Heart right ventricle (tissue), 16 donors: ENCODE measurements at regions of chr5 and their contacts with region 1.

Region 1: GRCh38 chr5:69234457-69235268 is at the start of gene CDK7:
- DNase-seq: peak; percentile 92 to 94
- ATAC-seq: peak; percentile 99 to 100 (median 100)
- H3K4me3 ChIP-seq: peak within 1 kb of the TSS; percentile 61 to 93 (median 89)
- H3K27ac ChIP-seq: peak within 1 kb of the TSS in 9 of 10 donors; percentile 68 to 92 (median 83)
- H3K4me1 ChIP-seq: peaks cover 4 to 34% (median 18%) of the 10 kb centered on the region in 9 donors
- H3K27me3 ChIP-seq: no peaks in the 10 kb centered on the region
- CTCF ChIP-seq: no peak
- total RNA-seq, gene CDK7: 10.5 to 17.9 (median 13.7) TPM

Region 2: DNA sequence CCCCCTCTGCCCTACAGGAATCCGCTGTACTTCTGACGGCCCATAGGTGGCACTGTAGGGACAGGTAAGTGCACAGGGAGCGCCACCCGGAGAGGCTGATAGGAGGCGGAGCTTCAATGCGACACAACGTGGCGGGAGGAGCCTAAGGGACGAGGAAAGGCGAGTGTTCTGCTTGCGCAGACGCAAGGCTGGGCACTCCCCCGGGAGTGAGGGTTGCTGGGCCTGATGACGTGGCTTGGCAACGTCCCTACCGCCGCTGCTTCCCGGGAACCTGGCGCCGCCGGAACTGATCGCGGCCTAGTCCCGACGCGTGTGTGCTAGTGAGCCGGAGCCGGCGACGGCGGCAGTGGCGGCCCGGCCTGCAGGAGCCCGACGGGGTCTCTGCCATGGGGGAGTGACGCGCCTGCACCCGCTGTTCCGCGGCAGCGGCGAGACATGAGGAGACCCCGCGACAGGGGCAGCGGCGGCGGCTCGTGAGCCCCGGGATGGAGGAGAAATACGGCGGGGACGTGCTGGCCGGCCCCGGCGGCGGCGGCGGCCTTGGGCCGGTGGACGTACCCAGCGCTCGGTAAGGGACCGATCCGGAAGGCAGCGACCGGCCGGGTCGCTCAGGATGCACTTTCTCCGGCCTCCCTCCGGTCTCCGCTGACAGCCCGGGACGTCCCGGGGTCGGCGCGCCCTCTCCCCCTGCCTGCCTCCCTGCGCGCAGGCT is 140.7 kb before region 1 on chr5 and contains the start of gene SLC30A5:
- intact Hi-C with region 1: loop called in 1 of 10 experiments (anchors 10 kb)
- DNase-seq: peak; percentile 99
- ATAC-seq: peak; percentile 100
- H3K4me3 ChIP-seq: peak within 1 kb of the TSS; percentile 68 to 100 (median 83)
- H3K27ac ChIP-seq: peak within 1 kb of the TSS; percentile 86 to 99 (median 96)
- H3K4me1 ChIP-seq: peaks cover 4 to 38% (median 22%) of the 10 kb centered on the region in 9 donors
- H3K27me3 ChIP-seq: no peaks in the 10 kb centered on the region
- CTCF ChIP-seq: peak; percentile 86 to 99 (median 93)
- total RNA-seq, gene SLC30A5: 25.7 to 36.7 (median 32.1) TPM

Region 3: DNA sequence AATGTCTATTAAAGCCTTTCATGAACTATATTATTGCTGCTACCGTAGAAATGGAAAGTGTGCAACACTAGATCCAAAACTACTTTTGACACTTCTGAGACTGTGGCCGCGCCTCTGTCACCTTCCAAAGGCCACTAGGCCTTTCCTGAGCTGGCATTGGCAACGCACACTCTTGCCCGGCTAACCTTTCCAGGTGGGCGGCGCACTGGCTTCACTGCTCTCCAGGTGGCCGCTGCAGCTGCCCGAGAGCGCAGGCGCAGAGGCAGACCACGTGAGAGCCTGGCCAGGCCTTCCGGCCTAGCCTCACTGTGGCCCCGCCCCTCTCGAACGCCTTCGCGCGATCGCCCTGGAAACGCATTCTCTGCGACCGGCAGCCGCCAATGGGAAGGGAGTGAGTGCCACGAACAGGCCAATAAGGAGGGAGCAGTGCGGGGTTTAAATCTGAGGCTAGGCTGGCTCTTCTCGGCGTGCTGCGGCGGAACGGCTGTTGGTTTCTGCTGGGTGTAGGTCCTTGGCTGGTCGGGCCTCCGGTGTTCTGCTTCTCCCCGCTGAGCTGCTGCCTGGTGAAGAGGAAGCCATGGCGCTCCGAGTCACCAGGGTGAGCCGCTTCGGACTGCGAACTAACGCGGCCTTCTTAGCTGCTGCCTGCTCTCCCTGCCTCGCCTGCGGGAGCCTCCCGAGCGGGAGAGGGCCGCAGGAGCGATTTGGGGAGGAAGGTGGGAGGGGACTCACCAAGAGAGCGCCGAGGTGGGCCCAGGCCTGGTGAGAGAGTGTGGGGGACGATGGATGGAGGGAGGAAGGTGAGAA is 67.8 kb before region 1 on chr5 and contains the start of gene CCNB1:
- intact Hi-C with region 1: loop called in 2 of 10 experiments (anchors 2 to 10 kb)
- DNase-seq: peak; percentile 97 to 98
- ATAC-seq: peak; percentile 100
- H3K4me3 ChIP-seq: peak within 1 kb of the TSS; percentile 47 to 82 (median 68)
- H3K27ac ChIP-seq: peak within 1 kb of the TSS in 6 of 10 donors; percentile 23 to 67 (median 48)
- H3K4me1 ChIP-seq: peaks cover 3 to 24% (median 10%) of the 10 kb centered on the region in 9 donors
- H3K27me3 ChIP-seq: no peaks in the 10 kb centered on the region
- CTCF ChIP-seq: peak in 1 of 9 donors; percentile 28
- total RNA-seq, gene CCNB1: 2.2 to 17.6 (median 3.7) TPM

Region 4: DNA sequence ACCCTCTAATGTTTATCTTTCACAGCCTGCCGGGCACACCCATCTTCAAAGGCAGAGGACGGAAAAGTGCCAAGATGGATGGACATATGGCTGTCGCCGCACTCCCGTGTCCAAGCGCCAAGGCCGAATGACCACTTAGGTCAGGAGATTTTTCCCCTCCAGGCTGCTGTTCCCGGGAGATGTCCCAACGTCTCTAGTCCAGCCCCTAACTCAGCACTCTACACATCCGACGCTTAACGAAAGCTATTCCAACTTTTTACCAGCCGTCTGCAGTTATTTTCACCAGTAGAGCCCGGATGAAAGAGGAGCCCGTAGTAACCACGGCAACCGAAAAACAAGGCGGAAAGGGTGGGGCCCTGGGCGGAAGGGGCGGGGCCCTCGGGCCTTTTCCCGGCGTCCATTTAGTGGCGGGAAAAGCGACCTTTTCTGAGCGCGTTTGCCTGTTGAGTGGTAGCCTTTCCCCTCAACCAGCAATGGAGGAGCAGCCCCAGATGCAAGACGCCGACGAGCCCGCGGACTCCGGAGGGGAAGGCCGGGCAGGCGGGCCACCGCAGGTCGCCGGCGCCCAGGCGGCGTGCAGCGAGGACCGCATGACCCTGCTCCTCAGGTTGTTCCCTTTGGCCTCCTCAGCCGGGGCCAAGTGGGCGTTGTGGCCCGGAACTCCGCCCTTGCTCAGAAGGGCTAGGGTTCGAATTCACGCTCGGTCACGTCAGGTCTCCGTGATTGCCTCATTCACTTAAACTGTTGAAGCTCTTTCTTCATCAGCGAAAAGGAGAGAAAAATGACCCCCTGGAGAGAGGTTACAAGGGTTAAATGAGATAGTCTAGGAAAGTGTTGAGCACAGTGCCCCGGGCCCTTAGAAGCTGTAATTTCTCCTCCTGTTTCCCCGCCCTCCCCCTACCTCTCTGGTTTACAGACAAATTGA is 45.2 kb before region 1 on chr5 and contains the start of gene CENPH:
- intact Hi-C with region 1: loop called in 1 of 10 experiments (anchors 2 kb)
- DNase-seq: peak; percentile 87 to 91
- ATAC-seq: peak; percentile 97 to 100 (median 98)
- H3K4me3 ChIP-seq: peak within 1 kb of the TSS; percentile 49 to 93 (median 78)
- H3K27ac ChIP-seq: peak within 1 kb of the TSS in 9 of 10 donors; percentile 35 to 82 (median 76)
- H3K4me1 ChIP-seq: peaks cover 3 to 18% (median 17%) of the 10 kb centered on the region in 9 donors
- H3K27me3 ChIP-seq: no peaks in the 10 kb centered on the region
- CTCF ChIP-seq: no peak
- total RNA-seq, gene CENPH: 2.4 to 5.1 (median 3.4) TPM

Region 5: GRCh38 chr5:69217548-69218526 is 16.8 kb before region 1 on chr5:
- intact Hi-C with region 1: loop called in 2 of 10 experiments (anchors 1 to 2 kb)
- DNase-seq: peak; percentile 97 to 99
- ATAC-seq: peak; percentile 98 to 99 (median 99)
- H3K4me3 ChIP-seq: peak overlapping the region; percentile 75 to 100 (median 87)
- H3K27ac ChIP-seq: peak overlapping the region; percentile 95 to 99 (median 98)
- H3K4me1 ChIP-seq: peaks cover 3 to 37% (median 16%) of the 10 kb centered on the region in 9 donors
- H3K27me3 ChIP-seq: no peaks in the 10 kb centered on the region
- CTCF ChIP-seq: peak in 7 of 9 donors; percentile 24 to 47 (median 40)

Region 6: DNA sequence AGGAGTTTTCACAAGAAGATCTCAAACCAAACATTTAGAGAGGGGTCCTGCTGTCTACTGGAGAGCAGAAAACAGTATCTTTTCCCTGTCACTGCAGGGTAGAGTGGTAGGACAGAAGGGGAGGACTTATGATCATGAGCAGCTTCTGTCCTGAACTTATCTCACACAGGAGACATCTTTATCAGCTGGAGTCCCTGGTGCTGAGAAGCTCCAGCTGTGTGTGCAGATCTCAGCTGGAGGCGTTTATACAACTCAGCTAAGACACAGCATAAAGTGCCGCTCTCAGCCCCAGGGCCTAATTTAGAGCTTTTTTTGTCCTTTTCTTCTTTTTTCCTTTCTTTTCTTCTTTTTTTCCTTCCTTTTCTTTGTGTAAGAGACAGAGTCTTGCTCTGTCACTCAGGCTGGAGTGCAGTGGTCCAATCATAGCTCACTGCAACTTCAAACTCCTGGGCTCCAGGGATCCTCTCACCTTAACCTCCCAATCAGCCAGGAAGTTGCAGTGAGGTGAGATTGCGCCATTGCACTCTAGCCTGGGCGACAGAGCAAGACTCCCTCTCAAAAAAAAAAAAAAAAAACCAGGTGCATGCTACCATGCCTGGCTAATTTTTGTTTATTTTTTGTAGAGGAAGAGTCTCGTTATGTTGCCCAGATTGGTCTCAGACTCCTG is 66.0 kb after region 1 on chr5:
- intact Hi-C with region 1: no loop called
- DNase-seq: no peak
- ATAC-seq: no peak
- H3K4me3 ChIP-seq: no peak overlapping the region
- H3K27ac ChIP-seq: no peak overlapping the region
- H3K4me1 ChIP-seq: no peaks in the 10 kb centered on the region
- H3K27me3 ChIP-seq: no peaks in the 10 kb centered on the region
- CTCF ChIP-seq: no peak

Region 7: GRCh38 chr5:69369369-69370121 is 134.9 kb after region 1 on chr5 and contains the starts of genes AK6, RAD17 and TAF9:
- intact Hi-C with region 1: loop called in 2 of 10 experiments (anchors 10 kb)
- DNase-seq: peak; percentile 92 to 94
- ATAC-seq: peak; percentile 98 to 99 (median 98)
- H3K4me3 ChIP-seq: peak within 1 kb of the TSS; percentile 52 to 87 (median 78)
- H3K27ac ChIP-seq: peak within 1 kb of the TSS; percentile 95 to 100 (median 99)
- H3K4me1 ChIP-seq: peaks cover 0 to 50% (median 31%) of the 10 kb centered on the region in 9 donors
- H3K27me3 ChIP-seq: no peaks in the 10 kb centered on the region
- CTCF ChIP-seq: peak in 1 of 9 donors; percentile 1
- total RNA-seq, gene AK6: 20.8 to 53.2 (median 28.7) TPM
- total RNA-seq, gene RAD17: 17.5 to 23.5 (median 19.9) TPM
- total RNA-seq, gene TAF9: 36.8 to 51.5 (median 44.5) TPM